ENCODE measurements at regions of chr4 and their contacts with region 1.

Region 1: GRCh38 chr4:48340965-48341775 is at the start of gene SLAIN2:
- DNase-seq: peak; percentile 98 to 99
- H3K4me3 ChIP-seq: peak within 1 kb of the TSS; percentile 71
- H3K4me3 Mint-ChIP-seq: peak within 1 kb of the TSS; percentile 99
- H3K27ac Mint-ChIP-seq: peak within 1 kb of the TSS; percentile 95
- H3K4me1 ChIP-seq: peaks cover 34% of the 10 kb centered on the region
- H3K4me1 Mint-ChIP-seq: peaks cover 27% of the 10 kb centered on the region
- H3K27me3 ChIP-seq: no peaks in the 10 kb centered on the region
- H3K27me3 Mint-ChIP-seq: no peaks in the 10 kb centered on the region
- CTCF ChIP-seq: peak in 1 of 2 experiments; percentile 43
- total RNA-seq, gene SLAIN2: 44.8 and 46.6 TPM in 2 replicates

Region 2: GRCh38 chr4:48223633-48224295 is 117.4 kb before region 1 on chr4:
- CTCF ChIA-PET with region 1: no interaction called
- POLR2A ChIA-PET with region 1: interaction called, 12 read pairs
- intact Hi-C with region 1: no loop called
- DNase-seq: no peak
- H3K4me3 ChIP-seq: no peak overlapping the region
- H3K4me3 Mint-ChIP-seq: no peak overlapping the region
- H3K27ac Mint-ChIP-seq: no peak overlapping the region
- H3K4me1 ChIP-seq: no peaks in the 10 kb centered on the region
- H3K4me1 Mint-ChIP-seq: no peaks in the 10 kb centered on the region
- H3K27me3 ChIP-seq: no peaks in the 10 kb centered on the region
- H3K27me3 Mint-ChIP-seq: no peaks in the 10 kb centered on the region
- CTCF ChIP-seq: no peak

Region 3: GRCh38 chr4:48269861-48270522 is 71.2 kb before region 1 on chr4:
- CTCF ChIA-PET with region 1: no interaction called
- POLR2A ChIA-PET with region 1: no interaction called
- intact Hi-C with region 1: loop called (anchors 2 kb)
- DNase-seq: peak; percentile 94
- H3K4me3 ChIP-seq: peak overlapping the region; percentile 89
- H3K4me3 Mint-ChIP-seq: peak overlapping the region; percentile 91
- H3K27ac Mint-ChIP-seq: peak overlapping the region; percentile 72
- H3K4me1 ChIP-seq: 0 out of 2 replicates have a peak, but pooled peaks cover 7% of the 10 kb centered on the region
- H3K4me1 Mint-ChIP-seq: no peaks in the 10 kb centered on the region
- H3K27me3 ChIP-seq: no peaks in the 10 kb centered on the region
- H3K27me3 Mint-ChIP-seq: no peaks in the 10 kb centered on the region
- CTCF ChIP-seq: peak in 1 of 2 experiments; percentile 25

Region 4: GRCh38 chr4:48296365-48296764 is 44.8 kb before region 1 on chr4:
- CTCF ChIA-PET with region 1: no interaction called
- POLR2A ChIA-PET with region 1: no interaction called
- intact Hi-C with region 1: no loop called
- DNase-seq: no peak
- H3K4me3 ChIP-seq: no peak overlapping the region
- H3K4me3 Mint-ChIP-seq: no peak overlapping the region
- H3K27ac Mint-ChIP-seq: no peak overlapping the region
- H3K4me1 ChIP-seq: no peaks in the 10 kb centered on the region
- H3K4me1 Mint-ChIP-seq: no peaks in the 10 kb centered on the region
- H3K27me3 ChIP-seq: no peaks in the 10 kb centered on the region
- H3K27me3 Mint-ChIP-seq: peaks cover under 1% of the 10 kb centered on the region
- CTCF ChIP-seq: no peak

Region 5: DNA sequence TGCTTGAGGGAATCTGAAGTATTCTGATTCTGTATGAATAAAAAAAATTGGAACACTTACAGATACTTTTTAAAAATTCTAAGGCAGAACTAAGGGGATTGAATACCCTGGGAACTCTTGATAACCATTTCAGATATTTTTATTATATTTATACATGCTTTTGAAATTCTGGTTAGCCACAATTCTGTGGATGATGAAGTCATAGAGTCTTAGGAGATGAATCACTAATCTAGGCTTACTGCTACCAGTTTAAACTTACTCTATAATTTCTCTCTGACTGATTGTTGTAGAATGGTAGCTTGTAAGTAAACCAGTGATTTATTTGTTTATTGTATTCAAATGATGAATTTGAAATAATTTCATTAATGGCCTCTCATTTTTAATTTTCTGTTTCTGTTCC is 11.2 kb before region 1 on chr4:
- CTCF ChIA-PET with region 1: interaction called, 5 read pairs
- POLR2A ChIA-PET with region 1: no interaction called
- intact Hi-C with region 1: loop called (anchors 1 kb)
- DNase-seq: no peak
- H3K4me3 ChIP-seq: no peak overlapping the region
- H3K4me3 Mint-ChIP-seq: no peak overlapping the region
- H3K27ac Mint-ChIP-seq: no peak overlapping the region
- H3K4me1 ChIP-seq: peaks cover 39% of the 10 kb centered on the region
- H3K4me1 Mint-ChIP-seq: peaks cover 23% of the 10 kb centered on the region
- H3K27me3 ChIP-seq: no peaks in the 10 kb centered on the region
- H3K27me3 Mint-ChIP-seq: no peaks in the 10 kb centered on the region
- CTCF ChIP-seq: no peak